GM12878 (cell line): ENCODE measurements at regions of chr7 and their contacts with region 1.

Region 1: DNA sequence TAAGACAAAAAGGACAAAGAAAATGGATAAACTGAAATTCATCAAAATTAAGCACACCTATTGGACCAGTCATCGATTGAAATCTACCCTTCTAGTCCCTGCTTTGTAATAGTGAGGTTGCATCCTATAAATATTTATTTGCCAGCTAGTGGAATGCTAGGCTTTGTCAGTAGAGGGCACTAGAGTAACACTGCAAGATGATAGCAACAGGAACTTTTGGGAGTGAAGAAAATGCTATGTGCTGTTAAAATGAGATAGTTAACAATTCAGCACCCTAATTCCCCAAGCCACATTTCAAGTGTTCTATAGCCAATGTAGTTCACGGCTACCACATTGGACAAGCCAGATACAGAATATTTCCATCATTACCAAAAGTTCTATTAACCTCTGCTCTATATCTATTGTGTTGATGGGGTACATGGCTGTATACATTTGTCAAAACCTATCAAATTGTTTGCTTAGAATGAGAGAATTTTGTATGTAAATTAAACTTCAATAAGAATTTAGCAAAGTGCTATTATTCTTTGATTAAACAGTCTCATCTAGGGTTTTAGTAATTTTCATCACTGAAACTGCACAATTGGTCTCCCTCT is 69.8 kb downstream of the LSMEM1 start:
- DNase-seq: peak; percentile 23
- ATAC-seq: peak; percentile 90
- H3K4me3 ChIP-seq: no peak overlapping the region
- H3K27ac ChIP-seq: no peak overlapping the region
- H3K4me1 ChIP-seq: no peaks in the 10 kb centered on the region
- H3K27me3 ChIP-seq: no peaks in the 10 kb centered on the region; a peak in 1 of 4 replicates
- CTCF ChIP-seq: peak; percentile 84 to 94 (median 87)
- EP300 ChIP-seq: no peak
- POLR2A ChIP-seq: no peak
- RAD21 ChIP-seq: peak; percentile 100

Region 2: GRCh38 chr7:112571852-112572607 is 21.5 kb after region 1 on chr7:
- CTCF ChIA-PET with region 1: interaction called, 10 read pairs
- POLR2A ChIA-PET with region 1: no interaction called
- RAD21 ChIA-PET with region 1: no interaction called
- SMC1A ChIA-PET with region 1: interaction called, 5 read pairs
- in situ Hi-C with region 1: no loop called
- intact Hi-C with region 1: no loop called
- DNase-seq: no peak
- ATAC-seq: peak; percentile 62
- H3K4me3 ChIP-seq: no peak overlapping the region
- H3K27ac ChIP-seq: no peak overlapping the region
- H3K4me1 ChIP-seq: no peaks in the 10 kb centered on the region
- H3K27me3 ChIP-seq: no peaks in the 10 kb centered on the region
- CTCF ChIP-seq: peak in 2 of 3 experiments; percentile 23 to 33; a peak in 3 of 6 replicates
- EP300 ChIP-seq: no peak
- POLR2A ChIP-seq: no peak
- RAD21 ChIP-seq: 0 out of 2 replicates have a peak, but pooled peaks have one; percentile 31

Region 3: DNA sequence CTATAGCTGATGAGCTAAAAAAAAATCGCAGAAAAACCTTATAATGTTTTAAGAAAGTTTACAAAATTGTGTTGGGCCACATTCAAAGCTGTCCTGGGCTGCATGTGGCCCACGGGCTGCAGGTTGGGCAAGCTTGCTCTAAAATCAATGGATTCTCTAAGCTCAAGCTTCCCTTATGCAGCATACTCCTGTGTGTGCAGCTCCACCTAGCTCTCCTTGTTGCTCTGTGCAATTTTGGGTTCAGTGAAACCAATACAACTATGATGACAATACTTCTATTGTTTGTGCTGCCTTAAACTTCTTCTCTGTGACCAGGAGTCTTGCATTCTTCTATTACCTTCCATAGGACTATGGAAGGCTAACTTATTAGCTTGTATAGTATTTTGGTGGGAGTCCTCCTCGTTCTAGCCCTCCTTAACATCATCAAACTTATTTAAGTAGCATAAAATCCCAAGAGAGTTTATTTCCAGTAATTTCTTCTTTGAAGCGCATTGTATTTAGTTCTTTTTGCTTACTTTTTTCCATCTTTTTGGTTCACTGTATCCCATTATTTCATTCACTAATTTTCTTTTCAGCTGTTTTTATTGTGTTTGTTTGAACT is 738.7 kb after region 1 on chr7:
- CTCF ChIA-PET with region 1: interaction called, 9 read pairs
- POLR2A ChIA-PET with region 1: no interaction called
- RAD21 ChIA-PET with region 1: interaction called, 5 read pairs
- SMC1A ChIA-PET with region 1: interaction called, 3 read pairs
- in situ Hi-C with region 1: no loop called
- intact Hi-C with region 1: loop called (anchors 10 kb)
- DNase-seq: no peak
- ATAC-seq: peak; percentile 87
- H3K4me3 ChIP-seq: no peak overlapping the region
- H3K27ac ChIP-seq: no peak overlapping the region
- H3K4me1 ChIP-seq: no peaks in the 10 kb centered on the region
- H3K27me3 ChIP-seq: no peaks in the 10 kb centered on the region
- CTCF ChIP-seq: peak; percentile 43 to 69 (median 59); a peak in 5 of 6 replicates
- EP300 ChIP-seq: no peak
- POLR2A ChIP-seq: no peak
- RAD21 ChIP-seq: peak; percentile 61

Region 4: GRCh38 chr7:113710310-113711106 is 1159.9 kb after region 1 on chr7:
- CTCF ChIA-PET with region 1: interaction called, 4 read pairs
- POLR2A ChIA-PET with region 1: no interaction called
- RAD21 ChIA-PET with region 1: no interaction called
- SMC1A ChIA-PET with region 1: no interaction called
- in situ Hi-C with region 1: no loop called
- intact Hi-C with region 1: loop called (anchors 5 kb)
- DNase-seq: peak; percentile 44
- ATAC-seq: peak; percentile 95
- H3K4me3 ChIP-seq: no peak overlapping the region
- H3K27ac ChIP-seq: no peak overlapping the region
- H3K4me1 ChIP-seq: no peaks in the 10 kb centered on the region
- H3K27me3 ChIP-seq: no peaks in the 10 kb centered on the region
- CTCF ChIP-seq: peak; percentile 78 to 97 (median 91)
- EP300 ChIP-seq: no peak
- POLR2A ChIP-seq: no peak
- RAD21 ChIP-seq: peak; percentile 62